Activated CD4-positive, alpha-beta memory T cell treated with anti-CD3 and anti-CD28 coated beads for 36 hours (primary cell): ENCODE measurements at regions of chr1 and their contacts with region 1.

Region 1: DNA sequence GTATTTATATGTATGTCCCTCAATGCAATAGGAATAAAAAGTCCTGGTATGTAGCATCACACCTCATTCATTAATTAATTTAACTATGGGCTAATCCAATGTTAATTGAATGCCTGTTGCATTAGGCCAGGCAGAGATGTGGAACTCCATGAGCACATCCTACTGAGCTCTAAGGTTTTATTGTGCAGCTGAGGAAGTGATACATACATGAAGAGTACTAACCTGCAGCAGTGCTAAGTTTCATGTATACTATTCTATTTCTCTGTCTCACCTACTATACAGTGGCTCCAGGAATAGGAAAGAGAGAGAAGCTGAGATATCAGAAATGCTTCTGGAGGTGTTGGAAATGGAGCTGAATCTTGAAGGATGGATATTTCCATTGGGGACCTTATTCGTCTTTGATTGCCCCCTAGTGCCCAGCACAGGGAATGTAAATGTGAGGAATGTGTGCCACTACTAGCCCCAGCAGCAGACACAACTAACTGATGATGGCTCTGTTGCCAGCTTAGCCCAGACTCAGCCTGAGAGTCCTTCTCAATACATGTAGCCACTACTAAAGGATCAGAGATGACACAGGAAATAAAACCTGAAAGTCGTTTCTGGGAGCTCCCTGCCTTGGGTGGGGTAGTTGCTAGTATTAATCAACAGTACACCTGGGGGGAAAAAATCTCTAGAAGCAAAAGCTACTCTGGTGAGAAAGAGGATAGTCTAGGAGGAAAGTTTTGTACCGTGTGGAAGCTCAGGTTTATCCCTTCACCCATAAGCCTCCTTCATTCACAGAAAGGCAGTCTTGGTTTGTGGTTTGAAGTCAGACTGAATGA is 173.3 kb upstream of the FOXD3 start:
- DNase-seq: peak; percentile 18
- H3K4me3 Mint-ChIP-seq: no peak overlapping the region
- H3K27ac Mint-ChIP-seq: no peak overlapping the region
- H3K4me1 Mint-ChIP-seq: no peaks in the 10 kb centered on the region
- H3K27me3 Mint-ChIP-seq: peaks cover 9% of the 10 kb centered on the region

Region 2: GRCh38 chr1:62841587-62842169 is 307.4 kb before region 1 on chr1:
- CTCF ChIA-PET with region 1: interaction called, 10 read pairs
- POLR2A ChIA-PET with region 1: no interaction called
- intact Hi-C with region 1: no loop called
- DNase-seq: no peak
- H3K4me3 Mint-ChIP-seq: no peak overlapping the region
- H3K27ac Mint-ChIP-seq: no peak overlapping the region
- H3K4me1 Mint-ChIP-seq: no peaks in the 10 kb centered on the region
- H3K27me3 Mint-ChIP-seq: no peaks in the 10 kb centered on the region

Region 3: GRCh38 chr1:62964141-62964540 is 184.9 kb before region 1 on chr1:
- CTCF ChIA-PET with region 1: interaction called, 6 read pairs
- POLR2A ChIA-PET with region 1: no interaction called
- intact Hi-C with region 1: loop called (anchors 2 kb)
- DNase-seq: no peak
- H3K4me3 Mint-ChIP-seq: no peak overlapping the region
- H3K27ac Mint-ChIP-seq: no peak overlapping the region
- H3K4me1 Mint-ChIP-seq: no peaks in the 10 kb centered on the region
- H3K27me3 Mint-ChIP-seq: peaks cover 6% of the 10 kb centered on the region